Breast epithelium (tissue), 4 donors: ENCODE measurements at regions of chr20 and their contacts with region 1.

Region 1: GRCh38 chr20:1005452-1006027 is 3.4 kb upstream of the RSPO4 start:
- DNase-seq: no peak
- H3K4me3 ChIP-seq: no peak overlapping the region
- H3K27ac ChIP-seq: no peak overlapping the region
- H3K4me1 ChIP-seq: no peaks in the 10 kb centered on the region
- H3K27me3 ChIP-seq: peaks cover 0 to 15% of the 10 kb centered on the region in 2 donors
- CTCF ChIP-seq: no peak
- POLR2A ChIP-seq: no peak

Region 2: GRCh38 chr20:967796-968742 is 37.5 kb before region 1 on chr20:
- intact Hi-C with region 1: no loop called
- DNase-seq: no peak
- H3K4me3 ChIP-seq: no peak overlapping the region
- H3K27ac ChIP-seq: no peak overlapping the region
- H3K4me1 ChIP-seq: no peaks in the 10 kb centered on the region
- H3K27me3 ChIP-seq: peaks cover 0 to 10% of the 10 kb centered on the region in 2 donors
- CTCF ChIP-seq: no peak
- POLR2A ChIP-seq: no peak

Region 3: GRCh38 chr20:1072258-1072657 is 66.7 kb after region 1 on chr20:
- intact Hi-C with region 1: no loop called
- DNase-seq: no peak
- H3K4me3 ChIP-seq: no peak overlapping the region
- H3K27ac ChIP-seq: no peak overlapping the region
- H3K4me1 ChIP-seq: no peaks in the 10 kb centered on the region
- H3K27me3 ChIP-seq: no peaks in the 10 kb centered on the region
- CTCF ChIP-seq: no peak
- POLR2A ChIP-seq: no peak

Region 4: DNA sequence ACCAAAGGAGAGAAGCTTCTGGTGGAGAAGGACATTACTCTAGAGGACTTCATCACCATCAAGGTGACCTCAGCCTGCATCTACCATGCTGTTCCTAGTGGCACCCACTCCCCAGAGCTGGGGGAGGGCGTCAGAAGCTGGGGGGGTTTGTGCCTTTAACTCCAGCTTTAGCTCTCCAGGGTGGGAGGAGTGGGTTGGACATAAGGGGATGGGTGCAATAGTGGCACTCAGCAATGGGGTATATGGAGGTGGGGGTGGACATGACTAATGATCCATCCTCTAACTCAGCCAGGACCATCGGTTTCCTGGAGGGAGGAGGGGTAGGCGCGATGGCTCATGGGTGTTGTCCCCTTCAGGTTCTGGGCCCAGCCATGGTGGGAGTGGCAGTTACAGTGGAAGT is 1425.0 kb after region 1 on chr20:
- intact Hi-C with region 1: loop called (anchors 5 kb)
- DNase-seq: no peak
- H3K4me3 ChIP-seq: no peak overlapping the region
- H3K27ac ChIP-seq: no peak overlapping the region
- H3K4me1 ChIP-seq: no peaks in the 10 kb centered on the region
- H3K27me3 ChIP-seq: no peaks in the 10 kb centered on the region
- CTCF ChIP-seq: no peak
- POLR2A ChIP-seq: no peak